ENCODE measurements at regions of chr10 and their contacts with region 1.

Region 1: GRCh38 chr10:6473901-6474370 is 106.1 kb downstream of the PRKCQ start:
- DNase-seq: peak in 8 of 9 donors; percentile 48 to 72 (median 62)
- ATAC-seq: peak; percentile 77
- H3K4me3 ChIP-seq: peak overlapping the region; percentile 63
- H3K4me3 Mint-ChIP-seq: peak overlapping the region; percentile 75 to 92 (median 88)
- H3K27ac ChIP-seq: peak overlapping the region; percentile 78
- H3K27ac Mint-ChIP-seq: peak overlapping the region; percentile 87 to 100 (median 96)
- H3K4me1 ChIP-seq: peaks cover 20 to 29% of the 10 kb centered on the region in 2 donors
- H3K4me1 Mint-ChIP-seq: peaks cover 46 to 81% (median 67%) of the 10 kb centered on the region in 7 donors
- H3K27me3 ChIP-seq: no peaks in the 10 kb centered on the region
- H3K27me3 Mint-ChIP-seq: no peaks in the 10 kb centered on the region

Region 2: DNA sequence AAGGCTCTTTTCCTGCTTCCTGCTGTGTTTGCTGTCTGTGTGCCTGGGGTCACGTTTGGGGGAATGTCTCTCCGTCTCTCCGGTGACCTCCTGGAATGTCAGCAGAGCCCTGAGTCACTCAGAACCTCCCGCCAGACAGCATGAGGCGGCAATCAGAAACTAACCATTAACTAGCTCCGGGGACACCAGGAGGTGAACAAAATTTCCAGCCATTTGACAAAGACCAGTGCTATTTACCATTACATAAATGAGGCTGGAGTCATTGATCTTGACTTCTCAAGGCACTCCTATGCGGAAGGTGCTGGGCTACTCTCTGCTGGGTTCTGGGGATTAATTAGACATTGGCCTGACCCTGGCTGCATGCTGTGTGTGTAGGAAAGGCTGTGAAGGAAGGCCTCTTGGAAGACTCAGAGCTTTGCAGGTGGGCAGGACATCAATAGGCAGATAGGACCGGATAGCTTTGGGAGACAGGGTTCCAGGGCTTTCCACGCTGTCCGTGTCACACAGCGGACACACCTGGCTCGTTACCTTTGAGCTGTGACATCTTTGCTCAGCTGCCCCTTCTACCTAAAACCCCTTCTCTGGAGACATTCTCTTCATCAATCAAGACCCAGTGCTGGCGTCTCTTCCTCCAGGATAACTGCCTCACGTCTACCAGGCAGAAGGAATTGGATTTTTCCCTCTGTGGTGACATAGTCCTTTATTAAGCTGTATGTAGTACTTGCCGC is 194.2 kb before region 1 on chr10:
- CTCF ChIA-PET with region 1: no interaction called
- POLR2A ChIA-PET with region 1: no interaction called
- intact Hi-C with region 1: no loop called
- DNase-seq: no peak
- ATAC-seq: no peak
- H3K4me3 ChIP-seq: no peak overlapping the region
- H3K4me3 Mint-ChIP-seq: peak overlapping the region in 1 of 10 donors; percentile 63
- H3K27ac ChIP-seq: no peak overlapping the region
- H3K27ac Mint-ChIP-seq: peak overlapping the region in 2 of 9 donors; percentile 58 to 59
- H3K4me1 ChIP-seq: peaks cover 0 to 8% of the 10 kb centered on the region in 2 donors
- H3K4me1 Mint-ChIP-seq: peaks cover 5 to 44% (median 11%) of the 10 kb centered on the region in 7 donors
- H3K27me3 ChIP-seq: no peaks in the 10 kb centered on the region
- H3K27me3 Mint-ChIP-seq: no peaks in the 10 kb centered on the region

Region 3: GRCh38 chr10:6445501-6446316 is 28.2 kb before region 1 on chr10:
- CTCF ChIA-PET with region 1: interaction called, 6 read pairs
- POLR2A ChIA-PET with region 1: no interaction called
- intact Hi-C with region 1: loop called in 1 of 2 experiments (anchors 2 kb)
- DNase-seq: peak in 8 of 9 donors; percentile 28 to 49 (median 43)
- ATAC-seq: peak; percentile 64
- H3K4me3 ChIP-seq: no peak overlapping the region
- H3K4me3 Mint-ChIP-seq: peak overlapping the region in 5 of 10 donors; percentile 0 to 60 (median 30)
- H3K27ac ChIP-seq: peak overlapping the region; percentile 17
- H3K27ac Mint-ChIP-seq: peak overlapping the region; percentile 4 to 84 (median 66)
- H3K4me1 ChIP-seq: no peaks in the 10 kb centered on the region
- H3K4me1 Mint-ChIP-seq: peaks cover 10 to 49% (median 31%) of the 10 kb centered on the region in 7 donors
- H3K27me3 ChIP-seq: no peaks in the 10 kb centered on the region
- H3K27me3 Mint-ChIP-seq: no peaks in the 10 kb centered on the region

Region 4: GRCh38 chr10:6498771-6499170 is 24.8 kb after region 1 on chr10:
- CTCF ChIA-PET with region 1: interaction called, 5 read pairs
- POLR2A ChIA-PET with region 1: interaction called, 10 read pairs
- intact Hi-C with region 1: loop called (anchors 1 kb)
- DNase-seq: peak in 8 of 9 donors; percentile 48 to 75 (median 67)
- ATAC-seq: peak; percentile 85
- H3K4me3 ChIP-seq: no peak overlapping the region
- H3K4me3 Mint-ChIP-seq: peak overlapping the region; percentile 13 to 86 (median 59)
- H3K27ac ChIP-seq: peak overlapping the region; percentile 36
- H3K27ac Mint-ChIP-seq: peak overlapping the region; percentile 81 to 94 (median 90)
- H3K4me1 ChIP-seq: peaks cover 33 to 49% of the 10 kb centered on the region in 2 donors
- H3K4me1 Mint-ChIP-seq: peaks cover 24 to 47% (median 43%) of the 10 kb centered on the region in 7 donors
- H3K27me3 ChIP-seq: no peaks in the 10 kb centered on the region
- H3K27me3 Mint-ChIP-seq: no peaks in the 10 kb centered on the region

Region 5: GRCh38 chr10:6530211-6530840 is 56.4 kb after region 1 on chr10:
- CTCF ChIA-PET with region 1: interaction called, 4 read pairs
- POLR2A ChIA-PET with region 1: no interaction called
- intact Hi-C with region 1: loop called (anchors 1 kb)
- DNase-seq: peak; percentile 37 to 89 (median 85)
- ATAC-seq: peak; percentile 96
- H3K4me3 ChIP-seq: peak overlapping the region; percentile 34
- H3K4me3 Mint-ChIP-seq: peak overlapping the region; percentile 84 to 95 (median 88)
- H3K27ac ChIP-seq: peak overlapping the region; percentile 74
- H3K27ac Mint-ChIP-seq: peak overlapping the region; percentile 97 to 100 (median 99)
- H3K4me1 ChIP-seq: peaks cover 46 to 58% of the 10 kb centered on the region in 2 donors
- H3K4me1 Mint-ChIP-seq: peaks cover 67 to 99% (median 91%) of the 10 kb centered on the region in 7 donors
- H3K27me3 ChIP-seq: no peaks in the 10 kb centered on the region
- H3K27me3 Mint-ChIP-seq: no peaks in the 10 kb centered on the region

Region 6: GRCh38 chr10:6563075-6563474 is 89.1 kb after region 1 on chr10:
- CTCF ChIA-PET with region 1: interaction called, 3 read pairs
- POLR2A ChIA-PET with region 1: no interaction called
- intact Hi-C with region 1: loop called in 1 of 2 experiments (anchors 1 kb)
- DNase-seq: peak in 4 of 9 donors; percentile 33 to 60 (median 39)
- ATAC-seq: peak; percentile 56
- H3K4me3 ChIP-seq: peak overlapping the region; percentile 42
- H3K4me3 Mint-ChIP-seq: peak overlapping the region; percentile 69 to 89 (median 80)
- H3K27ac ChIP-seq: peak overlapping the region; percentile 46
- H3K27ac Mint-ChIP-seq: peak overlapping the region; percentile 47 to 94 (median 87)
- H3K4me1 ChIP-seq: peaks cover 69 to 73% of the 10 kb centered on the region in 2 donors
- H3K4me1 Mint-ChIP-seq: peaks cover 65 to 96% (median 91%) of the 10 kb centered on the region in 7 donors
- H3K27me3 ChIP-seq: no peaks in the 10 kb centered on the region
- H3K27me3 Mint-ChIP-seq: no peaks in the 10 kb centered on the region

Region 7: GRCh38 chr10:6647811-6648526 is 174.0 kb after region 1 on chr10:
- CTCF ChIA-PET with region 1: interaction called, 3 read pairs
- POLR2A ChIA-PET with region 1: interaction called, 12 read pairs
- intact Hi-C with region 1: loop called in 1 of 2 experiments (anchors 1 kb)
- DNase-seq: peak; percentile 37 to 75 (median 64)
- ATAC-seq: peak; percentile 94
- H3K4me3 ChIP-seq: no peak overlapping the region
- H3K4me3 Mint-ChIP-seq: peak overlapping the region in 1 of 10 donors; percentile 32
- H3K27ac ChIP-seq: no peak overlapping the region
- H3K27ac Mint-ChIP-seq: peak overlapping the region in 3 of 9 donors; percentile 19 to 67 (median 38)
- H3K4me1 ChIP-seq: peaks cover 5 to 10% of the 10 kb centered on the region in 2 donors
- H3K4me1 Mint-ChIP-seq: peaks cover 0 to 46% (median 27%) of the 10 kb centered on the region in 7 donors
- H3K27me3 ChIP-seq: no peaks in the 10 kb centered on the region
- H3K27me3 Mint-ChIP-seq: no peaks in the 10 kb centered on the region

Region 8: DNA sequence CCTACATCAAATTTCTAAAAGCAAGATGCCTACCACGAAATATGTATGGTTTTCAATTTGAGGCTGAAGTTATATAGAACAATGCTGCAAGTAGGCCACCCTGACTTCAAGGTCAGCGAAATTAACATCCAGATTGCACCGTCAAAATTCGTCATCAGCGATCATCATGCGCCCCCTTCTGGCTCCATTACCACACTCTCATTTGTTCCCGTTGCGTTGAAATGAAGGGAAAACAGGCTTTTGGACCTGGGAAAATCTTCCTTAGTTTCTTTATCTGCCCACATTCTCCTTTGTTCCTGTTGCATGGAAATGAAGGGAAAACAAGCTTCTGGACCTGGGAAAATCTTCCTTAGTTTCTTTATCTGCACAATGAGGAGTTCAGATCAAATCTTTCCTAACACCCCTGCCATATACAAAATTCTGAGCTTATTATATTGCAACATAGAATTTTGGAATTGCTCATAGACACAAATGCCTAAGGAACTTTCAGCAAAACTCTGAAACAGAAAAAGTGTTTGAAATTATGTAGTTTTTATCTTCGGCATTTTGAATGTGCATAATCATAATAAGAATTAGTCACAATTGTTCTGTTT is 204.4 kb after region 1 on chr10:
- CTCF ChIA-PET with region 1: interaction called, 4 read pairs
- POLR2A ChIA-PET with region 1: no interaction called
- intact Hi-C with region 1: loop called in 1 of 2 experiments (anchors 1 kb)
- DNase-seq: peak in 8 of 9 donors; percentile 24 to 55 (median 48)
- ATAC-seq: peak; percentile 56
- H3K4me3 ChIP-seq: no peak overlapping the region
- H3K4me3 Mint-ChIP-seq: no peak overlapping the region
- H3K27ac ChIP-seq: no peak overlapping the region
- H3K27ac Mint-ChIP-seq: no peak overlapping the region
- H3K4me1 ChIP-seq: no peaks in the 10 kb centered on the region
- H3K4me1 Mint-ChIP-seq: peaks cover 0 to 12% (median 0%) of the 10 kb centered on the region in 7 donors
- H3K27me3 ChIP-seq: no peaks in the 10 kb centered on the region
- H3K27me3 Mint-ChIP-seq: peaks cover 0 to 66% (median 0%) of the 10 kb centered on the region in 5 donors